ENCODE measurements at regions of chr3 and their contacts with region 1.

Region 1: DNA sequence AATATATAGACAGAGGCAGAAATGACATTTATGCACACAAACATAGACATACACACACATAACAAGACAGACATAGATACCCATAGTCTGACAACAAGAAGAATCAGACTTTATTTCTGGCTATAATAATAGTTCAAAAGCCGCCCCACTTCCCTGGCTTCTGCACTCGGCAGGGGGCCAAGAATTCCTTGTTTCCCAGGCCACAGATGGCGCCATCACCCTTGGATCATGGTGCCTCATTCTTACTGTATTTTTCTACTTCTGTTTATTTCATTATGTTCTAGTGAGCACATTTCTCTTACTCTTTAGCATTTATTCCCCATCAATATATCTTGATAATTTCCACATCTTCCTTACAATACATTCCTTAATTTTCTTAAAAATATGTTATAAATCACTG is 387.5 kb downstream of the NLGN1 start:
- DNase-seq: no peak
- ATAC-seq: no peak
- H3K4me3 ChIP-seq: no peak overlapping the region
- H3K4me3 Mint-ChIP-seq: no peak overlapping the region
- H3K27ac ChIP-seq: no peak overlapping the region
- H3K27ac Mint-ChIP-seq: no peak overlapping the region
- H3K4me1 ChIP-seq: no peaks in the 10 kb centered on the region
- H3K4me1 Mint-ChIP-seq: no peaks in the 10 kb centered on the region
- H3K27me3 ChIP-seq: no peaks in the 10 kb centered on the region
- H3K27me3 Mint-ChIP-seq: no peaks in the 10 kb centered on the region

Region 2: GRCh38 chr3:171967137-171967783 is 1817.7 kb before region 1 on chr3:
- CTCF ChIA-PET with region 1: interaction called in 1 of 2 experiments, 11 read pairs
- POLR2A ChIA-PET with region 1: no interaction called
- DNase-seq: no peak
- ATAC-seq: no peak
- H3K4me3 ChIP-seq: no peak overlapping the region
- H3K4me3 Mint-ChIP-seq: no peak overlapping the region
- H3K27ac ChIP-seq: no peak overlapping the region
- H3K27ac Mint-ChIP-seq: no peak overlapping the region
- H3K4me1 ChIP-seq: no peaks in the 10 kb centered on the region
- H3K4me1 Mint-ChIP-seq: no peaks in the 10 kb centered on the region
- H3K27me3 ChIP-seq: no peaks in the 10 kb centered on the region
- H3K27me3 Mint-ChIP-seq: peaks cover 0 to 3% of the 10 kb centered on the region in 2 donors

Region 3: DNA sequence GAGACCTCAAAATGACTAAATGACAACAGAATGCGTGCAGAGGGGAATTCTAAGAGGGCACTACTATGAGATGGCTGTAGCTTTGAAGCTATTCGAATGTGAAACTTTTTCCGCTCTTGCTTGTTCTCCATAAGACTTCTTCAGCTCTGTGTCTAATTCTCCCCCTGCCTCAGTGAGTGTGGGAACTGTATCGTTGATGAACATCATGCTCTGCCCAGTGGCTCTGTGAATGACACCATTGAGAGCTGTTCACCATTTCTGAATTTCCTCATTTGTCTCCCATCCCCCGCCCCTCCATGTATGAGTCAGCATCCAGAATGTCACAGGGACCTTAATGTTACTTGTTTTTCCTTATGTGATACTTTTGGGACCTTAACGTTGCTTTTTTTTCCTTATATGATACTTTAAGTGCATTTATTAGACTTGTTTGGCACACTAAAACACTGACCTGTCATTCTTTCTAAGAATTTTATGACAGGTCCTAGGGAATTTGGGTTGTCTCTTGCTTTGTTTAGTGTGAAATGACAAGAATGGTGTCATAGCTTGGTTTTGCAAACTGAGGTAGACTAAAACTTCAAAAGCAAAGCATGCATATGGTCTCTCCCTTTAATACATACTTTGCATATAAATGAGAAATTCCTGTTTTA is 1646.1 kb before region 1 on chr3:
- CTCF ChIA-PET with region 1: no interaction called
- POLR2A ChIA-PET with region 1: no interaction called
- DNase-seq: peak in 3 of 35 experiments; percentile 17 to 25 (median 21)
- ATAC-seq: no peak
- H3K4me3 ChIP-seq: no peak overlapping the region
- H3K4me3 Mint-ChIP-seq: peak overlapping the region in 2 of 3 donors; percentile 11 to 44
- H3K27ac ChIP-seq: no peak overlapping the region
- H3K27ac Mint-ChIP-seq: peak overlapping the region in 1 of 2 donors; percentile 48
- H3K4me1 ChIP-seq: peaks cover 9 to 11% of the 10 kb centered on the region in 2 experiments
- H3K4me1 Mint-ChIP-seq: peaks cover 57 to 78% (median 62%) of the 10 kb centered on the region in 3 donors
- H3K27me3 ChIP-seq: no peaks in the 10 kb centered on the region
- H3K27me3 Mint-ChIP-seq: no peaks in the 10 kb centered on the region